CD14-positive monocyte (primary cell): ENCODE measurements at regions of chr2 and their contacts with region 1.

Region 1: GRCh38 chr2:152513681-152514080 is 178.7 kb downstream of the FMNL2 start:
- DNase-seq: no peak
- H3K4me3 ChIP-seq: no peak overlapping the region
- H3K4me3 Mint-ChIP-seq: no peak overlapping the region
- H3K27ac ChIP-seq: no peak overlapping the region
- H3K27ac Mint-ChIP-seq: no peak overlapping the region
- H3K4me1 ChIP-seq: no peaks in the 10 kb centered on the region
- H3K4me1 Mint-ChIP-seq: no peaks in the 10 kb centered on the region
- H3K27me3 ChIP-seq: no peaks in the 10 kb centered on the region
- H3K27me3 Mint-ChIP-seq: peaks cover 0 to 2% (median 0%) of the 10 kb centered on the region in 3 donors
- CTCF ChIP-seq: no peak

Region 2: GRCh38 chr2:152594022-152594766 is 80.5 kb after region 1 on chr2:
- intact Hi-C with region 1: loop called in 1 of 2 experiments (anchors 2 kb)
- DNase-seq: peak; percentile 76 to 84 (median 81)
- H3K4me3 ChIP-seq: peak overlapping the region in 1 of 3 experiments; percentile 9
- H3K4me3 Mint-ChIP-seq: peak overlapping the region in 1 of 2 donors; percentile 49
- H3K27ac ChIP-seq: peak overlapping the region; percentile 27 to 68
- H3K27ac Mint-ChIP-seq: peak overlapping the region; percentile 73 to 97 (median 86)
- H3K4me1 ChIP-seq: peaks cover 22 to 25% of the 10 kb centered on the region in 2 donors
- H3K4me1 Mint-ChIP-seq: peaks cover 33% of the 10 kb centered on the region
- H3K27me3 ChIP-seq: no peaks in the 10 kb centered on the region
- H3K27me3 Mint-ChIP-seq: peaks cover 0 to 2% (median 0%) of the 10 kb centered on the region in 3 donors
- CTCF ChIP-seq: peak; percentile 38